ENCODE measurements at regions of chr14 and their contacts with region 1.

Region 1: DNA sequence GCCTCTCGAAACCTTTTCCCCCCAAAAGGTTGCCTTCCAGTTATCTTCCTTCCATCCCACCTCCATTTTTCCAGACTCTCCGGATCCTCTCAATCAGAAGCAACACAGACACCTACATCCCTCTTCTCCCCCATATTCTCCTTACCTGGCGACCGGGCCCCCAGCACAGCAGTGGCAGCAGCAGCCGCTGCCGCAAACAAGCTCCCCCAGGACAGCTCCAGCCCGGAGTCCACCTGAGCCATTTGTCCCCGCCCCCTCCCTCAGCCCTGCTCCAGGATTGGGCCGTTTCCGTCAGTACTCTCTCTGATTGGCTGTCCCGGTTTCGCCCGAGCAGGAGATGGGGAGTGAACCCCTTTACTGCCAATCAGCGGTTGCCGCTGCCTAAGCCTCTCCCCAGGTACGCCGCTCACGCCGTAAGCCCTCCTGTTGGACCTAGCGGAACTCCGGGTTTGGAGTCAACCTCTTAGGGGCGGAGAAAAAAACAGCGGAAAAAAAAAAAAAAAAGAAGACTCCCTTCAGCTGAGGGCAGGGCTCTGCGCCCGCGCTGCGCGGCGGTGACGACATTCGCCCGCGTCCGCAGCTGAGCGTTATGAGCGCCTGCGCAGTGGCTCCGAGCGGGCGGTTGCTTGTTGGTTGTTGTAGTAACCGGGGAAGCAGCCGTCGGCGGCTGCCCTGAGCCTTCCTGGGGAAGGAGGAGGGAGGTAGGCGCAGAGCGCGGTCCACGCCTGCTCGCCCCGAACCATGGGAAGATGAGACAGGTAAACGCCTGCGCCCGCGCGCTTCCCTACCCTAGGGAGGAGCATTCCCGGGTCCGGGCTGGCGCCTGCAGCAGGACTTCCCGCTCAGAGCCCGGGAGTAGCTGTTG is at the starts of genes ERG28 and TTLL5:
- DNase-seq: peak; percentile 98 to 99
- H3K4me3 ChIP-seq: peak within 1 kb of the TSS; percentile 87
- H3K4me3 Mint-ChIP-seq: peak within 1 kb of the TSS; percentile 92
- H3K27ac Mint-ChIP-seq: peak within 1 kb of the TSS; percentile 92
- H3K4me1 ChIP-seq: no peaks in the 10 kb centered on the region
- H3K4me1 Mint-ChIP-seq: no peaks in the 10 kb centered on the region
- H3K27me3 ChIP-seq: no peaks in the 10 kb centered on the region
- H3K27me3 Mint-ChIP-seq: no peaks in the 10 kb centered on the region
- CTCF ChIP-seq: no peak
- total RNA-seq, gene ERG28: 31.0 and 36.1 TPM in 2 replicates
- total RNA-seq, gene TTLL5: 38.2 and 45.3 TPM in 2 replicates

Region 2: GRCh38 chr14:75427482-75428229 is 233.2 kb before region 1 on chr14 and contains the start of gene JDP2:
- CTCF ChIA-PET with region 1: no interaction called
- POLR2A ChIA-PET with region 1: interaction called, 10 read pairs
- intact Hi-C with region 1: no loop called
- DNase-seq: peak; percentile 93 to 96
- H3K4me3 ChIP-seq: peak within 1 kb of the TSS; percentile 84
- H3K4me3 Mint-ChIP-seq: peak within 1 kb of the TSS; percentile 83
- H3K27ac Mint-ChIP-seq: peak within 1 kb of the TSS; percentile 67
- H3K4me1 ChIP-seq: peaks cover 19% of the 10 kb centered on the region
- H3K4me1 Mint-ChIP-seq: peaks cover 18% of the 10 kb centered on the region
- H3K27me3 ChIP-seq: no peaks in the 10 kb centered on the region
- H3K27me3 Mint-ChIP-seq: no peaks in the 10 kb centered on the region
- CTCF ChIP-seq: peak in 1 of 2 experiments; percentile 34
- total RNA-seq, gene JDP2: 95.7 TPM in 2 replicates

Region 3: GRCh38 chr14:75560962-75561432 is 99.9 kb before region 1 on chr14:
- CTCF ChIA-PET with region 1: interaction called, 11 read pairs
- POLR2A ChIA-PET with region 1: interaction called, 3 read pairs
- intact Hi-C with region 1: no loop called
- DNase-seq: peak; percentile 87 to 90
- H3K4me3 ChIP-seq: no peak overlapping the region
- H3K4me3 Mint-ChIP-seq: no peak overlapping the region
- H3K27ac Mint-ChIP-seq: no peak overlapping the region
- H3K4me1 ChIP-seq: peaks cover 16% of the 10 kb centered on the region
- H3K4me1 Mint-ChIP-seq: peaks cover 29% of the 10 kb centered on the region
- H3K27me3 ChIP-seq: no peaks in the 10 kb centered on the region
- H3K27me3 Mint-ChIP-seq: peaks cover 3% of the 10 kb centered on the region
- CTCF ChIP-seq: peak; percentile 82 to 87

Region 4: GRCh38 chr14:75689012-75689411 is 28.1 kb after region 1 on chr14:
- CTCF ChIA-PET with region 1: no interaction called
- POLR2A ChIA-PET with region 1: no interaction called
- intact Hi-C with region 1: no loop called
- DNase-seq: no peak
- H3K4me3 ChIP-seq: no peak overlapping the region
- H3K4me3 Mint-ChIP-seq: no peak overlapping the region
- H3K27ac Mint-ChIP-seq: no peak overlapping the region
- H3K4me1 ChIP-seq: peaks cover 8% of the 10 kb centered on the region
- H3K4me1 Mint-ChIP-seq: peaks cover 13% of the 10 kb centered on the region
- H3K27me3 ChIP-seq: no peaks in the 10 kb centered on the region
- H3K27me3 Mint-ChIP-seq: no peaks in the 10 kb centered on the region
- CTCF ChIP-seq: no peak

Region 5: DNA sequence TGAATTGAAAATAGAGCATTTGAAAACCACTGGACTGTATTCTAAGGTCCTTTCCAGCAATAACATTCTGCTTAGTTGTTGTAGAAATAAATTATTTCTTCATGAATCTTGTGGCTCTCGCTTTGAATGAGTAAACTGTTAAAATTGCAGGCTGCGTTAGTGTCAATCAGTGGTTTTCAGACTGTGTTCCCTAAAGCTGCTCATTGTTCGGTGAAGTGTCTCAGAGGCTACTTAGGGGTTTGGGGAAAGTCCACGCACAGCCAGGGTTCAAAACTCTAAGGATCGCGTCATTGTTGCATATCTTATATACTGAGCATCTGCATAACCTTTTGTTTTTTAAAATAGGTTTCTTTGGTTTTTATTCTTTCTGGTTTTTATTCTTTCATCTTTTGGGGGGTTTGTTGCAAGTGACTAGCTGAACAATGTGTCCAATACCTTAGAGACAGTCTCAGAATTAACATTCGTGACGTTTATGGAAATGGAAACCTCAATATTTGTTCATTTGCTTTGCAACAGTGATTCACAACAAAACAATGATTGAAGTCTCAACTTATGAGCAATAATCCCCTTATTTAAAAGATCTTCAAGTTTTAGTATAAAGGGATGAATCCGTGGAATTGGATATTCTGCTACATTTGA is 108.3 kb after region 1 on chr14:
- CTCF ChIA-PET with region 1: no interaction called
- POLR2A ChIA-PET with region 1: no interaction called
- intact Hi-C with region 1: no loop called
- DNase-seq: no peak
- H3K4me3 ChIP-seq: no peak overlapping the region
- H3K4me3 Mint-ChIP-seq: no peak overlapping the region
- H3K27ac Mint-ChIP-seq: no peak overlapping the region
- H3K4me1 ChIP-seq: no peaks in the 10 kb centered on the region
- H3K4me1 Mint-ChIP-seq: no peaks in the 10 kb centered on the region
- H3K27me3 ChIP-seq: no peaks in the 10 kb centered on the region
- H3K27me3 Mint-ChIP-seq: no peaks in the 10 kb centered on the region
- CTCF ChIP-seq: no peak

Measured in Caco-2 (cell line).